MCF 10A (cell line): ENCODE measurements at regions of chr1 and their contacts with region 1.

Region 1: GRCh38 chr1:152954434-152954833 is 7.4 kb downstream of the SPRR5 start:
- DNase-seq: peak; percentile 85
- H3K4me3 Mint-ChIP-seq: peak overlapping the region; percentile 48
- H3K27ac Mint-ChIP-seq: peak overlapping the region; percentile 5
- H3K4me1 Mint-ChIP-seq: peaks cover 24% of the 10 kb centered on the region
- H3K27me3 Mint-ChIP-seq: no peaks in the 10 kb centered on the region
- CTCF ChIP-seq: no peak

Region 2: DNA sequence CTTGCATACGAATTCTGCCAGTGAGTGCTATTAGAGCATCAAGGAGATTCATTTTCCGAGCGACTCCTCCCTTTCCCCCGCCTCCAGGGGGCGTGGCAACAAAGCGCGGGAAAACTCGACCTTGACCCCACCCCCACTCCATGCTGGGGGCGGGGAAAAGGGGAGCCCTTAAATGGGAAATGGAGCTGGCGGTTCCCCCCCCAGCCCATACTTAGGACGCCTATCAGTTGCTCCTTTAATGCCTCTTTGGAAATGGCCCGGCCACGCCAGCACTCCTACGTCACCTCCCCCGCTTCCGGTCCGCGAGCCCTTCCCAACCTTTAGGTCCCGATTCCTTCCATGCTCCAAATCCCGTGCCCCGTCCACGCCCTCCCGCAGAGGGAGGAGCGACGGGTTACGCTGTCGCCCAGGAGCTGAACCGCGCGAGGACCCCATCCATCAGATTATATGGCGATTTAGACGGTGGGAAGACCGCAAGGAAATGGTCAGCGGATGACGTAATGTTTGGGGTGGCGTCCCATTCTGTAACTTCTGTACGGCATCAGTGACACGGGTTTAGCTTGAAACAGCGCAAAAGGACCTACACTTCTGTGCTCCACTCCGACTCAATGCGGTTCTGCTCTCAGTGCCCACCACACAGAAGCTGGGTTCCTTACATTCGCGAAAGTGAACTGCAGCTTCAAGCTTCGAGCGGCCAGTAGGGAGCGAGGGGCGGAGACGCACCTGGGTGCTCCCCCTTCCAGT is 1673.0 kb before region 1 on chr1:
- CTCF ChIA-PET with region 1: no interaction called
- POLR2A ChIA-PET with region 1: no interaction called
- intact Hi-C with region 1: no loop called
- DNase-seq: peak; percentile 100
- H3K4me3 Mint-ChIP-seq: peak overlapping the region; percentile 97
- H3K27ac Mint-ChIP-seq: peak overlapping the region; percentile 99
- H3K4me1 Mint-ChIP-seq: peaks cover 19% of the 10 kb centered on the region
- H3K27me3 Mint-ChIP-seq: peaks cover 14% of the 10 kb centered on the region
- CTCF ChIP-seq: no peak

Region 3: GRCh38 chr1:152646656-152647055 is 307.8 kb before region 1 on chr1:
- CTCF ChIA-PET with region 1: no interaction called
- POLR2A ChIA-PET with region 1: no interaction called
- intact Hi-C with region 1: no loop called
- DNase-seq: no peak
- H3K4me3 Mint-ChIP-seq: no peak overlapping the region
- H3K27ac Mint-ChIP-seq: no peak overlapping the region
- H3K4me1 Mint-ChIP-seq: peaks cover 6% of the 10 kb centered on the region
- H3K27me3 Mint-ChIP-seq: no peaks in the 10 kb centered on the region
- CTCF ChIP-seq: no peak

Region 4: GRCh38 chr1:152926091-152926490 is 28.3 kb before region 1 on chr1:
- CTCF ChIA-PET with region 1: interaction called, 5 read pairs
- POLR2A ChIA-PET with region 1: interaction called, 13 read pairs
- intact Hi-C with region 1: no loop called
- DNase-seq: peak; percentile 82
- H3K4me3 Mint-ChIP-seq: no peak overlapping the region
- H3K27ac Mint-ChIP-seq: no peak overlapping the region
- H3K4me1 Mint-ChIP-seq: peaks cover 11% of the 10 kb centered on the region
- H3K27me3 Mint-ChIP-seq: no peaks in the 10 kb centered on the region
- CTCF ChIP-seq: peak; percentile 98

Region 5: GRCh38 chr1:152941021-152941711 is 13.3 kb before region 1 on chr1:
- CTCF ChIA-PET with region 1: interaction called, 6 read pairs
- POLR2A ChIA-PET with region 1: interaction called, 54 read pairs
- intact Hi-C with region 1: no loop called
- DNase-seq: peak; percentile 75
- H3K4me3 Mint-ChIP-seq: no peak overlapping the region
- H3K27ac Mint-ChIP-seq: no peak overlapping the region
- H3K4me1 Mint-ChIP-seq: peaks cover 20% of the 10 kb centered on the region
- H3K27me3 Mint-ChIP-seq: no peaks in the 10 kb centered on the region
- CTCF ChIP-seq: no peak

Region 6: DNA sequence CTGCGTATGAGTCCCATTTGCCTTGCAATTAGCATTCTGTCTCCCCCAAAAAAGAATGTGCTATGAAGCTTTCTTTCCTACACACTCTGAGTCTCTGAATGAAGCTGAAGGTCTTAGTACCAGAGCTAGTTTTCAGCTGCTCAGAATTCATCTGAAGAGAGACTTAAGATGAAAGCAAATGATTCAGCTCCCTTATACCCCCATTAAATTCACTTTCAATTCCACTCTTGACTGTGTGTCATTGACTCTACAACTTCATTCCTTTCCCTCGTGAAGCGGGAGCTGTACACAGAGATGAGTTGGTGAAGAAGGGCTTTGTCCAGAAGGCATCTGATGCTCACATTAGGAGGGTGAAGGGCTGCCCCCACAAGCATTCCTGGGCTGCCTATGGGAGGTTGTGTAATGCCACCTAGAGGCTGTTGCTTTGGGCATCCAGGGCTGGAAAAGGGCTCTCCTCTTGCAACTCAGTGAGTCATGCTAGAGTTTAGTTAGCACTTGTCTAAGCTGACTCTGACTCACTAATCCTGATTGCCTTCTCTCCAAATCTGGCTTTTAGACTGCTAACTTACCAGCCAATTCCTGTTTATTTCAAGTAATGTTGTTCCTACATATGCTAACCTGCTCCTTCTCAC is 78.4 kb after region 1 on chr1:
- CTCF ChIA-PET with region 1: interaction called, 11 read pairs
- POLR2A ChIA-PET with region 1: interaction called, 14 read pairs
- intact Hi-C with region 1: loop called (anchors 5 kb)
- DNase-seq: peak; percentile 97
- H3K4me3 Mint-ChIP-seq: no peak overlapping the region
- H3K27ac Mint-ChIP-seq: peak overlapping the region; percentile 25
- H3K4me1 Mint-ChIP-seq: peaks cover 12% of the 10 kb centered on the region
- H3K27me3 Mint-ChIP-seq: no peaks in the 10 kb centered on the region
- CTCF ChIP-seq: peak; percentile 68

Region 7: GRCh38 chr1:153100236-153100635 is 145.8 kb after region 1 on chr1:
- CTCF ChIA-PET with region 1: no interaction called
- POLR2A ChIA-PET with region 1: interaction called, 14 read pairs
- intact Hi-C with region 1: no loop called
- DNase-seq: peak; percentile 97
- H3K4me3 Mint-ChIP-seq: no peak overlapping the region
- H3K27ac Mint-ChIP-seq: peak overlapping the region; percentile 82
- H3K4me1 Mint-ChIP-seq: peaks cover 33% of the 10 kb centered on the region
- H3K27me3 Mint-ChIP-seq: no peaks in the 10 kb centered on the region
- CTCF ChIP-seq: no peak